ENCODE measurements at regions of chr6 and their contacts with region 1.

Region 1: GRCh38 chr6:33425668-33426577 is 6.1 kb downstream of the SYNGAP1 start:
- DNase-seq: peak; percentile 66 to 87
- H3K4me3 ChIP-seq: peak overlapping the region; percentile 71
- H3K27ac ChIP-seq: peak overlapping the region; percentile 57
- H3K4me1 ChIP-seq: peaks cover 19% of the 10 kb centered on the region
- H3K27me3 ChIP-seq: peaks cover 21% of the 10 kb centered on the region
- CTCF ChIP-seq: peak; percentile 71

Region 2: DNA sequence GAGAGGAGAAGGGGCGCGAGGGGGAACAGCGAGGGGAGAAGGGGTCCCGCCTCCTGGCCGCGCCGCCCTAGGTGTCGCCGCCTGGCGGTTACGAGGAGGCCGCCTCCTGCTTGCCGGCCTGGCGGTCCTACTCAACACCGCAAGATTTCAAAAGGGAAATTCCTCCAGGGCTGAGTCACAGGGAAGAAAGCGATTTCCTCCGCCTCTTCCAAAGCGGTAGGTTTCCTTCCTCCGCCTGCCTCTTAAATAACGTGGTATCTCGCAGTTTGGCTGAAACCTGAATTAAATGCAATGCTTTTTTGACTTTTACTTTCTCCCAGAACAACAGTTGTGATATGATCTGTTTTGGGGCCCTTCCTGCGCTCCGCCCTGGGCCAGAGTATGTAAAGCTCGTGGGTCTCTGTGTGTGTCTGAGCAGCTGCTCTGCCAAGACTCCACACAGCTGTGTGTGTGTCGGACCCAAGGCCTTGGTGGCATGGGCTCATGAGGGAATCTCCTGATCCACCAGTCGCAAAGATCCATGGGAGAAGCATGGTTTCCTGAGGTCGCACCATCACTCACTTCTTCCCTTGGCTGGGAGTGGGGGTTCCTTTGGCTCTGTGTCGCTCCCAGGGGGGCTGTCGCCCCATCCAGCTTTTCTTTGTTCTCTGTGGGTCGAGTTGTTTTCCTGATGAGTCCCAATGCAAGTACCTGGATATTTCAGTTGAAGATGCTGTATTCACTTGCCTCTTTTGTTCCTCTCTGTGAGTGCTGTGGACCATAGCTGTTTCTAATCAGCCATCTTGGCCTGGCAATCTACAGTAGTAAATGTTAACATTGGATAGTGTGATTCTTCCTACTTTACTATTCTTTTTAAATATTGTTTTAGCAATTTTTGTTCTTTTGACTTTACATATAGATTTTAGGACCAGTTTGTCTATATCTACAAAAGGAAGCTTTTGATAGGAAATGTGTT is 1170.4 kb before region 1 on chr6:
- CTCF ChIA-PET with region 1: interaction called, 17 read pairs
- POLR2A ChIA-PET with region 1: no interaction called
- intact Hi-C with region 1: no loop called
- DNase-seq: peak; percentile 73 to 76
- H3K4me3 ChIP-seq: no peak overlapping the region
- H3K27ac ChIP-seq: no peak overlapping the region
- H3K4me1 ChIP-seq: peaks cover 5% of the 10 kb centered on the region; the same call in 1 of the 2 replicates
- H3K27me3 ChIP-seq: peaks cover 33% of the 10 kb centered on the region
- CTCF ChIP-seq: peak; percentile 55

Region 3: GRCh38 chr6:32954983-32955802 is 470.7 kb before region 1 on chr6:
- CTCF ChIA-PET with region 1: no interaction called
- POLR2A ChIA-PET with region 1: no interaction called
- intact Hi-C with region 1: no loop called
- DNase-seq: no peak
- H3K4me3 ChIP-seq: no peak overlapping the region
- H3K27ac ChIP-seq: no peak overlapping the region
- H3K4me1 ChIP-seq: peaks cover 4% of the 10 kb centered on the region
- H3K27me3 ChIP-seq: no peaks in the 10 kb centered on the region
- CTCF ChIP-seq: peak; percentile 33; the same call in 1 of the 2 replicates

Region 4: DNA sequence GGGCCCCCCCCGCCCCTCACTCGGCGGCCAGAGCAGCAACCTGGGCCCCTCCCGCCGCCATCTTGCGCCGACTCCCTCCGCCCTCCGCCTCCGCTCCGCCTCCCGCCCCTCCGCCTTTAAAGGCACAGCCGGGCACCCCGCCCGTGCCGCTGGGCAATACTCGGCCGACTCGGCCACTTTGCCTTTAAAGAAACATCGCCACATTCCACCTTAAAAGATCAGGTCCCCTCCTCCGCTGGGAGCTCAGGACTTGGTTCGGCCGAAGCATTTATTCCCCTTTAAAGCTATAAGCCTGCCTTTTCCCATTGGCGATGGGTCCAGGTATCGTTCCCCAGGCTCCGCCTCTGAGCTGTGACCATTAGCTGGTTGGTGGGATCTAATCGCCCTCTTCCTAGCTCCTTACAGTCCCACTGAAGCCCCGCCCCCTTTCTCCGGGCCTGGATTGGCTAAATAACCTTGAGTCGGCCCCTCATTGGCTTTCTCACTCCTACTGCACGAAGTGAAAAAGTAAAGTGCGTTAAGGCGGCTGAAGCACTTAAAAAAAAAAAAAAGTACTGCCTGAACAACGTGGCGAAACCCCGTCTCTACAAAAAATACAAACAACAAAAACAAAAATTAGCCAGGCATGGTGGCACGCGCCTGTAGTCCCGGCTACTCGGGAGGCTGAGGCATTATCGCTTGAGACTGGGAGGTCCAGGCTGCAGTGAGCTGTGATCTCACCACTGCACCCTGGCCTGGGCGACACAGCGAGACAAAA is 108.1 kb before region 1 on chr6 and contains the start of gene ZBTB22:
- CTCF ChIA-PET with region 1: no interaction called
- POLR2A ChIA-PET with region 1: interaction called, 24 read pairs
- intact Hi-C with region 1: no loop called
- DNase-seq: peak; percentile 97 to 98
- H3K4me3 ChIP-seq: peak within 1 kb of the TSS; percentile 49
- H3K27ac ChIP-seq: peak within 1 kb of the TSS; percentile 66
- H3K4me1 ChIP-seq: peaks cover 51% of the 10 kb centered on the region
- H3K27me3 ChIP-seq: no peaks in the 10 kb centered on the region
- CTCF ChIP-seq: no peak
- total RNA-seq, gene ZBTB22: 16.5 and 20.8 TPM in 2 replicates

Region 5: GRCh38 chr6:33367009-33367714 is 58.8 kb before region 1 on chr6:
- CTCF ChIA-PET with region 1: no interaction called
- POLR2A ChIA-PET with region 1: no interaction called
- intact Hi-C with region 1: no loop called
- DNase-seq: no peak
- H3K4me3 ChIP-seq: no peak overlapping the region
- H3K27ac ChIP-seq: no peak overlapping the region
- H3K4me1 ChIP-seq: peaks cover 17% of the 10 kb centered on the region
- H3K27me3 ChIP-seq: no peaks in the 10 kb centered on the region
- CTCF ChIP-seq: no peak

Region 6: GRCh38 chr6:33391278-33391921 is 34.5 kb before region 1 on chr6 and contains the start of gene KIFC1:
- CTCF ChIA-PET with region 1: interaction called, 4 read pairs
- POLR2A ChIA-PET with region 1: no interaction called
- intact Hi-C with region 1: loop called (anchors 1 kb)
- DNase-seq: peak; percentile 98
- H3K4me3 ChIP-seq: peak within 1 kb of the TSS; percentile 63
- H3K27ac ChIP-seq: peak within 1 kb of the TSS; percentile 78
- H3K4me1 ChIP-seq: peaks cover 39% of the 10 kb centered on the region
- H3K27me3 ChIP-seq: no peaks in the 10 kb centered on the region
- CTCF ChIP-seq: peak; percentile 90
- total RNA-seq, gene KIFC1: 82.9 and 91.4 TPM in 2 replicates

Region 7: DNA sequence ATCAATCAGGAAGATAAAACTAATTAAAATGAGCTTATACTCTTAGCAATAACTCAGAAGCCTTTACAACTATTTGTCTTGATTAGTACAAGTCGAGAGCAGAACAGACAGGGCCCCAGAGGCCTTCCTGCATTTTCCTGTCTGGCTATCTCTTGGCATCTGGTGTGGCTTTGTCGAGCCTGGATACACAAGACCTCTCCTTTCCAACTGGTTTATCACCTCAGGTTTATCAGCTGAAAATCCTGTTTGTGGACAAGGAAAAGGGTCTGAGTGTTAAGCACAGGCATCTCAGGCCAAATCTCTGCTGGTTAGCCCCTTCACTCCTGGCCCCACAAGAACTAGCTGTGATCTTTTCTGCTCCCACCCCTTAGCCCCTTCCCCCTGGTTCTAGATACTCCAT is 121.6 kb after region 1 on chr6:
- CTCF ChIA-PET with region 1: no interaction called
- POLR2A ChIA-PET with region 1: no interaction called
- intact Hi-C with region 1: no loop called
- DNase-seq: no peak
- H3K4me3 ChIP-seq: no peak overlapping the region
- H3K27ac ChIP-seq: no peak overlapping the region
- H3K4me1 ChIP-seq: no peaks in the 10 kb centered on the region
- H3K27me3 ChIP-seq: no peaks in the 10 kb centered on the region
- CTCF ChIP-seq: no peak

Region 8: DNA sequence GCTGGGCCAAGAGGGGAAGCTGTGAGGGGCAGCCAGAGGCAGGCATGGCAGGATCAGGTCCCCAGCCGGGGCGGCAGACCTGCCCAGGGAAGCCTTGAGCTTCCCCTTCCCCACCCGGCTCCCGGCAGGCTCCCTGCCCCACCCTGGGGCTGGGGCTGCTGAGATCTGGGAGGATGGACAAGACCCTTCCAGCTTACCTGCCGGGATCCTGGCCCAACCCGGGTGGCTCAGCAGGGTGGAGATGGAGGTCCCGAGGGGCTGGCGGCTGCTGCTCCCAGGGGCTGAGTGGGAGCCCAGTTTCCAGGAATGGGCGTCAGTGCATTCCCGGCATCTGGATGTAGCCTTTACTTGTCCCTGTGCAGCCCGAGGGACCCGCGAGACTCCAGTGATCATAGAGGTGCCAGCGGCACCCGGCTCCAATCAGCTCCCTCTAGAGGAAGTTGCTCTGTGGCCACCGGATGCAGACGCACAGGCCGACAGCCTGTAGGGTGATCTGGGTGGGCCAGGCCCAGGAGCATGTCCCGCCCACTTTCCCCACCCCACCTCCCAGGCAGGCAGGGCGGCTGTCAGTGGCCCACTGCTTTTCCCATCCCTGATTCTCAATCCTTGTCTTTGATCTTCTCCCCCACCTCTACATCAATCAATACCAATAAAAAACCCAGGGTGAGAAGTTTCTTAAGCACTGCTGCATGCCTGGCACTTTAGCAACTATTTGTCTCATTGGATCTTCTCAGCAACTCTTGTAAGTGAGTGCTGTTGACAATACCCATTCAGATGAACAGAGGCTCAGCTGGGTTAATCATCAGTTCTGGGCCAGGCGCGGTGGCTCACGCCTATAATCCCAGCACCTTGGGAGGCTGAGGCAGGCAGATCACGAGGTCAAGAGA is 154.1 kb after region 1 on chr6 and contains the start of gene BAK1:
- CTCF ChIA-PET with region 1: no interaction called
- POLR2A ChIA-PET with region 1: no interaction called
- intact Hi-C with region 1: loop called (anchors 2 kb)
- DNase-seq: peak; percentile 84 to 87
- H3K4me3 ChIP-seq: peak within 1 kb of the TSS; percentile 98
- H3K27ac ChIP-seq: no peak within 1 kb of the TSS
- H3K4me1 ChIP-seq: peaks cover 15% of the 10 kb centered on the region
- H3K27me3 ChIP-seq: no peaks in the 10 kb centered on the region
- CTCF ChIP-seq: peak; percentile 59
- total RNA-seq, gene BAK1: 24.6 and 28.4 TPM in 2 replicates

Region 9: GRCh38 chr6:33896391-33897183 is 470.7 kb after region 1 on chr6:
- CTCF ChIA-PET with region 1: no interaction called
- POLR2A ChIA-PET with region 1: no interaction called
- intact Hi-C with region 1: no loop called
- DNase-seq: no peak
- H3K4me3 ChIP-seq: no peak overlapping the region
- H3K27ac ChIP-seq: no peak overlapping the region
- H3K4me1 ChIP-seq: no peaks in the 10 kb centered on the region
- H3K27me3 ChIP-seq: peaks cover 97% of the 10 kb centered on the region
- CTCF ChIP-seq: no peak

Measured in PC-9 (cell line).